A673 (cell line): ENCODE measurements at regions of chr9 and their contacts with region 1.

Region 1: DNA sequence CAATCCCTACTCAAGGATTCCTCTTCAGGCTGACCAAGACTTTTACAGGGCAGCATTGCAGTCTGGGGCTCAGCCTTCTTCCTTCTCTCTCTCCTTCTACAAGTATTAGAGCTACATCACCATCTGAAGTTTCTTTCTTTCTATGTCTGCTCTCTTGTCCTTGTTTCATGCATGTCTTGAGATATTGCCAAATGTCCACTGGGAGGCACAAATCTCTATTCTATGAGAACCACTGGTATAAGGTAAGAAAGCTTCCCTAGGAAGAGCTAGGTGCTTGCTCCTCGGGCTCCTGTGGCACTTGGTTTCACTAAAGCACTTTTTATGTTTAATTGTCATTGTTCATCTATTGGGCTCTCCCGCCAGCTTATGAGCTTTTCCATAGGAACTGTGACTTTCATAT is 289.2 kb upstream of the PCSK5 start:
- DNase-seq: no peak
- H3K4me3 ChIP-seq: no peak overlapping the region
- H3K27ac ChIP-seq: no peak overlapping the region
- H3K4me1 ChIP-seq: no peaks in the 10 kb centered on the region
- H3K27me3 ChIP-seq: peaks cover 12% of the 10 kb centered on the region
- CTCF ChIP-seq: no peak

Region 2: GRCh38 chr9:75438716-75439115 is 162.6 kb before region 1 on chr9:
- CTCF ChIA-PET with region 1: no interaction called
- POLR2A ChIA-PET with region 1: no interaction called
- intact Hi-C with region 1: no loop called
- DNase-seq: no peak
- H3K4me3 ChIP-seq: no peak overlapping the region
- H3K27ac ChIP-seq: no peak overlapping the region
- H3K4me1 ChIP-seq: no peaks in the 10 kb centered on the region
- H3K27me3 ChIP-seq: no peaks in the 10 kb centered on the region
- CTCF ChIP-seq: no peak

Region 3: GRCh38 chr9:75664597-75664996 is 63.3 kb after region 1 on chr9:
- CTCF ChIA-PET with region 1: no interaction called
- POLR2A ChIA-PET with region 1: no interaction called
- intact Hi-C with region 1: loop called (anchors 10 kb)
- DNase-seq: no peak
- H3K4me3 ChIP-seq: no peak overlapping the region
- H3K27ac ChIP-seq: no peak overlapping the region
- H3K4me1 ChIP-seq: no peaks in the 10 kb centered on the region
- H3K27me3 ChIP-seq: peaks cover 11% of the 10 kb centered on the region
- CTCF ChIP-seq: no peak